ENCODE measurements at regions of chr2 and their contacts with region 1.

Region 1: DNA sequence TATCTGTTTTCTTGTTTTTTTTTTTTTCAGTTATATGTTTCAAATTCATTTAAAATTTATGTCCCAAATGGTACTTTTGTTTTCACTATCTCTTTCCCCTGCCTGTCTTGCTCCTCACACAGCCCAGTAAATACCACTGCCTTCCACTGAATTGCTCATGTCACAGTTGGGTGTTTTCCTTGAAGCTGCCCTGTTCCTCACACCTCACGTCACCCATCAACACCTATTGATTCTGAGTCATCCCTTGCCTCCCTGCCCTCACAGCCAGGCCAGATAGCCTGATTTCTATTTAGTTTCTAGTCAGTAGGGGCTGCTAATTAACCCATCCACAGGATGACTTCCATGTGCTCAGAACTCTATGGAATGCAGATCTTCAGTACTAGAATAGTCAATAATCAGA is 25.3 kb downstream of the FSHR start:
- DNase-seq: no peak
- H3K4me3 ChIP-seq: no peak overlapping the region
- H3K27ac ChIP-seq: no peak overlapping the region
- H3K4me1 ChIP-seq: no peaks in the 10 kb centered on the region
- H3K27me3 ChIP-seq: no peaks in the 10 kb centered on the region
- CTCF ChIP-seq: no peak
- EP300 ChIP-seq: no peak
- POLR2A ChIP-seq: no peak
- RAD21 ChIP-seq: no peak

Region 2: DNA sequence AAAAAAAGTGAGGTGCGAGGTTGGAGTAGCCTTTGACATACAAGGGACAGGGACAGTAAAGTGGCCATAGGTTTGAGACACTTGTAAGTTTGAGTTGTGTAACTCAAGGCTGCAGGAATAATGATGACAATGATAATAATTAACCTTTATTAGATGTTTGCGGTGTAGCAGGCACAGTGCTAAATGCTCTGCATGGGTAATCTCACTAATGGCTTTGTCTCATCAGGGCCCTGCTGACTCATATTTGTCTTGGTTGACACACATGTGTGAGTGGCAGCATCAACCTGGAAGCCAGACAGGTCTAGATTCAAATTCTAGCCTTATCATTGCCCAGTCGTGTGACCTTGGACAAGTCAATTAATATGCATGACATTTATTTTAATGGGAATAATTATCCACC is 100.9 kb before region 1 on chr2:
- CTCF ChIA-PET with region 1: no interaction called
- POLR2A ChIA-PET with region 1: no interaction called
- DNase-seq: no peak
- H3K4me3 ChIP-seq: no peak overlapping the region
- H3K27ac ChIP-seq: no peak overlapping the region
- H3K4me1 ChIP-seq: 0 out of 7 replicates have a peak, but pooled peaks cover 0 to 3% (median 0%) of the 10 kb centered on the region in 4 experiments
- H3K27me3 ChIP-seq: no peaks in the 10 kb centered on the region
- CTCF ChIP-seq: no peak
- EP300 ChIP-seq: no peak
- POLR2A ChIP-seq: no peak
- RAD21 ChIP-seq: no peak

Region 3: DNA sequence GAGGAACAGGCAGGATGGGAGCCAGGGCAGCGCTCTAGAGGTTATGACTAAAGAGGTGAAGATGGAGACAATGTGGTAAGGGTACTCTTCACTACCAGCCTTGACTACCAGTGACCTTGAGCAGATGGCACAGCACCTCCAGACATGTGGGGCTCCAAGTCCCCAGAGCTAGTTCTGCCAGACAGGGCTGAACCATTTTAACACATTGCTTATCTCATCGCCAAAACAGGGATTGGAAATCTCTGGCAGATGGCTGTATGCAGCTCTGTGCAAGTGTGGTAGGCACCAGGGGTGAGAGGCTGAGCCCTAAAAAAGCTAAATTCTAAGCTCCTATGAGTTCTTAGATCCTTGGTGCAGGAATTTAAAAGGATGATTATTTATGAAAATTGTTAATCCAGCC is 16.0 kb before region 1 on chr2:
- CTCF ChIA-PET with region 1: interaction called, 13 read pairs
- POLR2A ChIA-PET with region 1: no interaction called
- DNase-seq: no peak
- H3K4me3 ChIP-seq: no peak overlapping the region
- H3K27ac ChIP-seq: no peak overlapping the region
- H3K4me1 ChIP-seq: no peaks in the 10 kb centered on the region
- H3K27me3 ChIP-seq: no peaks in the 10 kb centered on the region
- CTCF ChIP-seq: no peak
- EP300 ChIP-seq: no peak
- POLR2A ChIP-seq: no peak
- RAD21 ChIP-seq: no peak